ENCODE measurements at regions of chr1 and their contacts with region 1.

Region 1: DNA sequence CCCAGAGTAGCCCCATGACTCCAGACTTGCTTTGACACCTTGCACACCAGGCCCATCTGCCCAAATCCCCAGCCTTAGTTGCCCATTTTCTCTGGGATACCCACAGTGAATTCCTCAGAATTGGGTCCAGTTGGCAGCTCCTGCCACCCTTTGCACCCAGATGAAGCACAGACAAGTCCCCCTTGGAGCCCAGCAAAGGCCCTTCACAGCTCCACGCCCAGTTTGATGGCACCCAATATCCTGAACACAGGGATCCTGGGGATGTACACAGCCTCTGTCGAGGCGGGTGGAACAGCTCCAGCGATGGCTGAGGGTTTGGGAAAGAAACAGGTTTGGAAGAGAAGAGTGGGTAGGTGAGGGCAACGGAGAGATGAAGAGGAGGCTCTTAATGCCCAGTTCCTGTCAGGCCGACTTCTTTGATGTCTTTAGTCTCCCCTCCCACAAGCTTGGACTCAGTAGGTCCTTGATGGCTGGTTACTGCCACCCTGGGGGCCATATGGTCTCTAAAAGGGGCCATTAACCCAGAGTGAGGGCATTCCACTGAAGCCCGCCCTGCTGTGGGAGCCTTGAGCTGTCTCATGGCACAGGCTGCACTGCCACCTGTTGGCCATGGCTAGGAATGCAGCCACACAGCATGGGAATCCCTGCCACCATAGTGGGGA is 21.7 kb downstream of the TMEM53 start:
- DNase-seq: peak; percentile 93
- ATAC-seq: peak; percentile 81
- H3K4me3 Mint-ChIP-seq: no peak overlapping the region
- H3K27ac Mint-ChIP-seq: peak overlapping the region; percentile 72
- H3K4me1 Mint-ChIP-seq: peaks cover 26% of the 10 kb centered on the region
- H3K27me3 Mint-ChIP-seq: no peaks in the 10 kb centered on the region
- CTCF ChIP-seq: peak; percentile 94

Region 2: DNA sequence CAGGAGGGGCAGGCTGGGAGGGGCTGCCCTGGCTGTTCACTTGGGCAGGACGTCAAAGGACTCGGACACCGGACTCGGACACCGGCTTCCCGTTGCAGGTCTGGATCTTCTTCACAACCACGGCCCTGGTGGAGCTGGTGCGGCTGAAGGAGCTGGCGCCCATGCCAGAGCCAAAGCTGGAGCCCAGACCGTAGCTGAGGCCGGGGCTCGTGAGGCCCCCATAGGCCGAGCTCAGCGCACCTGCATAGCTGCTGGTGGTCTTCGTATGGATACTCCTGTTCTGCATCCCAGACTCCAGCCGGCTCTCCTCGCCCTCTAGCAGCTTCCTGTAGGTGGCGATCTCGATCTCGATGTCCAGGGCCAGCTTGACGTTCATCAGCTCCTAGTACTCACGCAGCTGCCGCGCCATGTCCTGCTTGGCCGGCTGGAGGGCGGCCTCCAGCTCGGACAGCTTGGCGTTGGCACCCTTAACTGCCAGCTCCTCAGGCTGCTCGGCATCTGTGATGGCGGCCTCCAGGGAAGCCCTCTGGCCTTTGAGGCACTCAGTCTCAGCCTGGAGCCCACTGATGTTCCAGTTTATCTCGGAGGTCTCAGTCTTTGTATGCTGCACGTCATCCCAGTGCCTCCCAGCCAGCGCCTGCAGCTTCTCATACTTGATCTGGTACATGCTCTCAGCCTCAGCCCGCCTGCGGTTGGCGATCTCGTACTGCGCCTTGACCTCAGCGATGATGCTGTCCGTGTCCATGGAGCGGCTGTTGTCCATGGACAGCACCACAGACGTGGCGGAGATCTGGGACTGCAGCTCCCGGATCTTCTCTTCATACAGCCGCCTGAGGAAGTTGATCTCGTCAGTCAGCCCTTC is 549.1 kb before region 1 on chr1:
- CTCF ChIA-PET with region 1: interaction called, 10 read pairs
- POLR2A ChIA-PET with region 1: no interaction called
- DNase-seq: peak; percentile 84
- ATAC-seq: peak; percentile 30
- H3K4me3 Mint-ChIP-seq: no peak overlapping the region
- H3K27ac Mint-ChIP-seq: no peak overlapping the region
- H3K4me1 Mint-ChIP-seq: peaks cover 8% of the 10 kb centered on the region
- H3K27me3 Mint-ChIP-seq: peaks cover 8% of the 10 kb centered on the region
- CTCF ChIP-seq: no peak

Region 3: GRCh38 chr1:44511769-44512168 is 140.8 kb before region 1 on chr1:
- CTCF ChIA-PET with region 1: no interaction called
- POLR2A ChIA-PET with region 1: no interaction called
- DNase-seq: no peak
- ATAC-seq: no peak
- H3K4me3 Mint-ChIP-seq: no peak overlapping the region
- H3K27ac Mint-ChIP-seq: no peak overlapping the region
- H3K4me1 Mint-ChIP-seq: peaks cover 52% of the 10 kb centered on the region
- H3K27me3 Mint-ChIP-seq: peaks cover 16% of the 10 kb centered on the region; the same call in 1 of the 2 replicates
- CTCF ChIP-seq: no peak

Region 4: DNA sequence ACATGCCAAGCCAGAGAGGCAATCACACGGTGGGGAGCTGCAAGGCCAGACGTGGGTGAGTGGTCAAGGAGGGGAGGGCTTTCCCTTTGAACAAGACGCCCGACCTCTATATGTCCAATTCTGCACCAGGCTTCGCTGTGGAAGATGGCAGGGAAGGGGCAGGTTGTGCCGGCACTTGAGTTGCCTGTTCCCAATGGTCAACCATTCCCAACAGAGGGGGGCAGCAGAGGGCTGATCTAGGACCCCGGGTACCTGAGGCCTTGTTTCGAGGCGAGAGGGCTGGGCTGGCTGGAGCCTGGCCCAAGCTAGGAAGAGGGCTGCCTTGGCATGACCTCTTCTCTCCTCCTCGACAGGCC is 43.2 kb before region 1 on chr1:
- CTCF ChIA-PET with region 1: interaction called, 112 read pairs
- POLR2A ChIA-PET with region 1: no interaction called
- DNase-seq: peak; percentile 88
- ATAC-seq: peak; percentile 88
- H3K4me3 Mint-ChIP-seq: no peak overlapping the region
- H3K27ac Mint-ChIP-seq: no peak overlapping the region
- H3K4me1 Mint-ChIP-seq: peaks cover 11% of the 10 kb centered on the region
- H3K27me3 Mint-ChIP-seq: no peaks in the 10 kb centered on the region
- CTCF ChIP-seq: peak; percentile 29; the same call in 1 of the 2 replicates

Region 5: GRCh38 chr1:44631647-44632539 is 20.7 kb before region 1 on chr1:
- CTCF ChIA-PET with region 1: interaction called, 19 read pairs
- POLR2A ChIA-PET with region 1: interaction called, 10 read pairs
- DNase-seq: peak; percentile 84
- ATAC-seq: peak; percentile 82
- H3K4me3 Mint-ChIP-seq: peak overlapping the region; percentile 83
- H3K27ac Mint-ChIP-seq: peak overlapping the region; percentile 95
- H3K4me1 Mint-ChIP-seq: peaks cover 26% of the 10 kb centered on the region
- H3K27me3 Mint-ChIP-seq: no peaks in the 10 kb centered on the region
- CTCF ChIP-seq: no peak

Region 6: GRCh38 chr1:44674113-44675000 is 21.8 kb after region 1 on chr1 and contains the starts of genes ARMH1 and TMEM53:
- CTCF ChIA-PET with region 1: interaction called, 42 read pairs
- POLR2A ChIA-PET with region 1: interaction called, 6 read pairs
- DNase-seq: peak; percentile 99
- ATAC-seq: peak; percentile 94
- H3K4me3 Mint-ChIP-seq: peak within 1 kb of the TSS; percentile 92
- H3K27ac Mint-ChIP-seq: peak within 1 kb of the TSS; percentile 80; the same call in 1 of the 2 replicates
- H3K4me1 Mint-ChIP-seq: peaks cover 23% of the 10 kb centered on the region
- H3K27me3 Mint-ChIP-seq: no peaks in the 10 kb centered on the region
- CTCF ChIP-seq: no peak
- total RNA-seq, gene ARMH1: 0.74 to 1.6 TPM (median 0.78 TPM) in 3 replicates
- total RNA-seq, gene TMEM53: 8.2 to 10.9 TPM (median 10.0 TPM) in 3 replicates

Region 7: GRCh38 chr1:45018599-45019230 is 366.1 kb after region 1 on chr1:
- CTCF ChIA-PET with region 1: no interaction called
- POLR2A ChIA-PET with region 1: no interaction called
- DNase-seq: peak; percentile 78
- ATAC-seq: peak; percentile 95
- H3K4me3 Mint-ChIP-seq: no peak overlapping the region
- H3K27ac Mint-ChIP-seq: no peak overlapping the region
- H3K4me1 Mint-ChIP-seq: peaks cover 3% of the 10 kb centered on the region
- H3K27me3 Mint-ChIP-seq: no peaks in the 10 kb centered on the region; the same call in 1 of the 2 replicates
- CTCF ChIP-seq: peak; percentile 72

Measured in WTC11 (cell line).